Colonic mucosa (tissue), 4 donors: ENCODE measurements at regions of chr1 and their contacts with region 1.

Region 1: GRCh38 chr1:186212544-186213226 is 162.4 kb downstream of the TPR start:
- DNase-seq: peak; percentile 32
- H3K4me3 ChIP-seq: no peak overlapping the region
- H3K27ac ChIP-seq: no peak overlapping the region
- H3K4me1 ChIP-seq: no peaks in the 10 kb centered on the region
- H3K27me3 ChIP-seq: no peaks in the 10 kb centered on the region
- CTCF ChIP-seq: peak; percentile 73

Region 2: DNA sequence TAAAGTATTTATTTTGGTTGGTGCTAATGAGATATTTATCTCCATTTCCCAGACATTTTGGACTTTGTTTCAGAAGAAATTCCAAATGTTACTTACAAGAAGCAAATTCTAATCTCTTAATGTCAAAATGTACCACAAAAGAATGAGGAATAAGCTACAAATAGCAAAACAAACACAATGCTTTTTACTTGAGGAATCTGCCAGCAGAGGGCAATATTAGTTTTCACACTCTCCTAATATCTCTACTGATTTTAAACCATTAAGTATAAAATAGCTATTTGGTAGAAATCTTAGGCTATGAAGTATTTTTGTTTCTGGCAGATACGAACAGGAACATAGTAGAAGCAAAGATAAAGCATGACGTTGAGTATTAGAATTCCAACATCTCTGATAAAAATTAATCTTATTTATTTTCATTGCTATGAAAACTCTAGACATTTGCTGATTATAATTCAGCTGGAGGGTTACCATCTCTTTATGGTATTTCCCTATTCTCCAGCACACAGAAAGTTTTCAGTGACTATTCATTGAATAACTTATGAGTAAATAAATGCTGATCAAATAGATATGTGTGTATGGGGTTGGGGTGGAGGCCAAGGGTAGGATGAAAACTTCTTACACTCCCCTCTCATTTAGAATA is 491.9 kb before region 1 on chr1:
- intact Hi-C with region 1: loop called (anchors 10 kb)
- DNase-seq: no peak
- H3K4me3 ChIP-seq: no peak overlapping the region
- H3K27ac ChIP-seq: no peak overlapping the region
- H3K4me1 ChIP-seq: no peaks in the 10 kb centered on the region
- H3K27me3 ChIP-seq: no peaks in the 10 kb centered on the region
- CTCF ChIP-seq: peak; percentile 23

Region 3: DNA sequence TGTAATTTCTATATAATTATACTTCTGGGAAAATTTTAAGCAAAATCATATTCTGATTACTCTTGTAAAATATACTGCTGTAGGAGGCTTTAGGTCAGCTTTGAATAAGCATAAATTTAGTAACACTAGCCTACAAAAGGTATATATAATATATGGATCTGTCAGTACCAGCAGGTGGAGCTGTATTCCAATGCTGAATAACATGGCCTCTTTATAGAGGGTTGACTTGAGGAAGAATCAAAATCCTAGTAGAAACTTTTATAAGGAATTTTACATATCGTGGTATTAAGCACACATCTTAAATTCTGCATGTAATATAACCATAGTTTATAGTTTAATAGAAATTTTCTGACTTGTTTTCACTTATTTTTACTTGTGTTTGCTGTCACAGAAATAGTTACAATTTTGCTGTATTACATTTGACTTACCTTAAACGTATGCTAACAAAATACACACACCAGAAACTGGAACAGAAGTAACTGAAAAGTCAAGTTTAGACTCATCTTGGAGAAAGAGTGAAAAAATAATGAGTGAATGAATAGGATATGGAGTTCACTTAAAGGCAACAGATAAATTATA is 399.2 kb before region 1 on chr1:
- intact Hi-C with region 1: loop called (anchors 5 kb)
- DNase-seq: peak; percentile 41
- H3K4me3 ChIP-seq: no peak overlapping the region
- H3K27ac ChIP-seq: no peak overlapping the region
- H3K4me1 ChIP-seq: no peaks in the 10 kb centered on the region
- H3K27me3 ChIP-seq: no peaks in the 10 kb centered on the region
- CTCF ChIP-seq: peak; percentile 60

Region 4: GRCh38 chr1:186375088-186375953 is 162.6 kb after region 1 on chr1 and contains the starts of genes ODR4 and TPR:
- intact Hi-C with region 1: no loop called
- DNase-seq: peak; percentile 98
- H3K4me3 ChIP-seq: peak within 1 kb of the TSS; percentile 88
- H3K27ac ChIP-seq: peak within 1 kb of the TSS; percentile 97
- H3K4me1 ChIP-seq: peaks cover 6% of the 10 kb centered on the region
- H3K27me3 ChIP-seq: no peaks in the 10 kb centered on the region
- CTCF ChIP-seq: peak; percentile 90
- total RNA-seq, gene ODR4: 17.6 to 21.4 TPM
- total RNA-seq, gene TPR: 68.1 to 87.0 TPM